Activated CD8-positive, alpha-beta T cell treated with anti-CD3 and anti-CD28 coated beads, Interleukin-2, amount 10 ng/mL, durations not matched to agents 7 days and 5 days (primary cell): ENCODE measurements at regions of chr19 and their contacts with region 1.

Region 1: GRCh38 chr19:17235618-17236377 is 9.8 kb downstream of the OCEL1 start:
- DNase-seq: peak; percentile 82
- ATAC-seq: peak; percentile 96
- H3K4me3 Mint-ChIP-seq: peak overlapping the region; percentile 81
- H3K27ac Mint-ChIP-seq: no peak overlapping the region
- H3K4me1 Mint-ChIP-seq: peaks cover 12% of the 10 kb centered on the region
- H3K27me3 Mint-ChIP-seq: no peaks in the 10 kb centered on the region

Region 2: GRCh38 chr19:17107525-17108452 is 128.0 kb before region 1 on chr19:
- CTCF ChIA-PET with region 1: no interaction called
- POLR2A ChIA-PET with region 1: no interaction called
- DNase-seq: no peak
- ATAC-seq: no peak
- H3K4me3 Mint-ChIP-seq: no peak overlapping the region
- H3K27ac Mint-ChIP-seq: peak overlapping the region; percentile 55
- H3K4me1 Mint-ChIP-seq: peaks cover 55% of the 10 kb centered on the region
- H3K27me3 Mint-ChIP-seq: no peaks in the 10 kb centered on the region

Region 3: GRCh38 chr19:17266975-17267788 is 31.4 kb after region 1 on chr19 and contains the start of gene BABAM1:
- CTCF ChIA-PET with region 1: interaction called, 13 read pairs
- POLR2A ChIA-PET with region 1: interaction called, 4 read pairs
- DNase-seq: peak; percentile 99
- ATAC-seq: peak; percentile 94
- H3K4me3 Mint-ChIP-seq: peak within 1 kb of the TSS; percentile 90
- H3K27ac Mint-ChIP-seq: peak within 1 kb of the TSS; percentile 88
- H3K4me1 Mint-ChIP-seq: peaks cover 31% of the 10 kb centered on the region
- H3K27me3 Mint-ChIP-seq: no peaks in the 10 kb centered on the region
- total RNA-seq, gene BABAM1: 116 to 117 TPM